ENCODE measurements at regions of chr3 and their contacts with region 1.

Region 1: GRCh38 chr3:32510075-32510724 is 7.5 kb upstream of the CMTM6 start:
- DNase-seq: peak; percentile 77 to 78
- ATAC-seq: peak; percentile 98 to 99
- H3K4me3 ChIP-seq: no peak overlapping the region
- H3K27ac ChIP-seq: no peak overlapping the region
- H3K4me1 ChIP-seq: no peaks in the 10 kb centered on the region
- CTCF ChIP-seq: peak; percentile 92
- EP300 ChIP-seq: no peak
- POLR2A ChIP-seq: no peak
- RAD21 ChIP-seq: peak; percentile 96 to 99

Region 2: GRCh38 chr3:32498252-32498651 is 11.9 kb before region 1 on chr3:
- CTCF ChIA-PET with region 1: interaction called, 13 read pairs
- POLR2A ChIA-PET with region 1: interaction called, 3 read pairs
- DNase-seq: no peak
- ATAC-seq: no peak
- H3K4me3 ChIP-seq: no peak overlapping the region
- H3K27ac ChIP-seq: no peak overlapping the region
- H3K4me1 ChIP-seq: peaks cover 19% of the 10 kb centered on the region; the same call in 2 of the 3 replicates
- CTCF ChIP-seq: no peak
- EP300 ChIP-seq: no peak
- POLR2A ChIP-seq: no peak
- RAD21 ChIP-seq: no peak

Region 3: DNA sequence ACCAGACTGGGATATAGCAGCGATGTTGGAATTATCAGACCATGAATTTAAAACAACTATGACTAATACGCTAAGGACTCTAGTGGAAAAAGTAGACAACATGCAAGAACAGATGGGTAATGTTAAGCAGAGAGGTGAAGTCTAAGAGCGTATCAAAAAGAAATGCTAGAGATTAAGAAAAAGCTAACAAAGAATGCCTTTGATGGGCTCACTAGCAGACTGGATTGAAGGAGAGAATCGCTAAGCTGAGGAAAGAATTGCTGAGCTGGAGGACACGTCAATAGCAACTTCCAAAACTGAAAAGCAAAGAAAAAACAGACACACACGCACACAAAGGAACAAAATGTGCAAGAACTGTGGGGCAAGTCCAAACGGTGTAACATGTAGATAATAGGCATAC is 12.5 kb after region 1 on chr3:
- CTCF ChIA-PET with region 1: interaction called, 21 read pairs
- POLR2A ChIA-PET with region 1: no interaction called
- DNase-seq: no peak
- ATAC-seq: no peak
- H3K4me3 ChIP-seq: no peak overlapping the region
- H3K27ac ChIP-seq: no peak overlapping the region
- H3K4me1 ChIP-seq: no peaks in the 10 kb centered on the region
- CTCF ChIP-seq: no peak
- EP300 ChIP-seq: no peak
- POLR2A ChIP-seq: no peak
- RAD21 ChIP-seq: no peak

Region 4: DNA sequence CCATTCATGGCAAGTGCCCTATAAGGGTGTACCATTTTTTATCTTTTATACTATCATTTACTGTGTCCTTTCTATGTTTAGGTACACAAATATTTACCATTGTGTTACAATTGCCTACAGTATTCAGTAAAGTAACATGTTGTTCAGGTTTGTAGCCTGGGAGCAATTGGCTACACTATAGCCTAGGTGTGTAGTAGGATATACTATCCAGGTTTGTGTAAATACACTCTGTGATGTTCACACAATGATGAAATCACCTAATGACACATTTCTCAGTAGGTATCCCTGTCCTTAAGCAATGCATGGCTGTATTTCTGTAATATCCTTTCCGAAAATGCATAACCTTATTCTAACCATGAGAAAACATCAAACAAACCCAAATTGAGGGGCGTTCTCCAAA is 156.9 kb after region 1 on chr3:
- CTCF ChIA-PET with region 1: interaction called, 92 read pairs
- POLR2A ChIA-PET with region 1: no interaction called
- DNase-seq: no peak
- ATAC-seq: peak in 1 of 2 experiments; percentile 26; a peak in 3 of 6 replicates
- H3K4me3 ChIP-seq: no peak overlapping the region
- H3K27ac ChIP-seq: no peak overlapping the region
- H3K4me1 ChIP-seq: no peaks in the 10 kb centered on the region
- CTCF ChIP-seq: no peak
- EP300 ChIP-seq: no peak
- POLR2A ChIP-seq: no peak
- RAD21 ChIP-seq: no peak

Region 5: GRCh38 chr3:32675164-32675563 is 165.0 kb after region 1 on chr3:
- CTCF ChIA-PET with region 1: interaction called, 19 read pairs
- POLR2A ChIA-PET with region 1: no interaction called
- DNase-seq: no peak
- ATAC-seq: peak in 1 of 2 experiments; percentile 13; a peak in 1 of 6 replicates
- H3K4me3 ChIP-seq: no peak overlapping the region
- H3K27ac ChIP-seq: no peak overlapping the region
- H3K4me1 ChIP-seq: no peaks in the 10 kb centered on the region
- CTCF ChIP-seq: no peak
- EP300 ChIP-seq: no peak
- POLR2A ChIP-seq: no peak
- RAD21 ChIP-seq: no peak

Region 6: DNA sequence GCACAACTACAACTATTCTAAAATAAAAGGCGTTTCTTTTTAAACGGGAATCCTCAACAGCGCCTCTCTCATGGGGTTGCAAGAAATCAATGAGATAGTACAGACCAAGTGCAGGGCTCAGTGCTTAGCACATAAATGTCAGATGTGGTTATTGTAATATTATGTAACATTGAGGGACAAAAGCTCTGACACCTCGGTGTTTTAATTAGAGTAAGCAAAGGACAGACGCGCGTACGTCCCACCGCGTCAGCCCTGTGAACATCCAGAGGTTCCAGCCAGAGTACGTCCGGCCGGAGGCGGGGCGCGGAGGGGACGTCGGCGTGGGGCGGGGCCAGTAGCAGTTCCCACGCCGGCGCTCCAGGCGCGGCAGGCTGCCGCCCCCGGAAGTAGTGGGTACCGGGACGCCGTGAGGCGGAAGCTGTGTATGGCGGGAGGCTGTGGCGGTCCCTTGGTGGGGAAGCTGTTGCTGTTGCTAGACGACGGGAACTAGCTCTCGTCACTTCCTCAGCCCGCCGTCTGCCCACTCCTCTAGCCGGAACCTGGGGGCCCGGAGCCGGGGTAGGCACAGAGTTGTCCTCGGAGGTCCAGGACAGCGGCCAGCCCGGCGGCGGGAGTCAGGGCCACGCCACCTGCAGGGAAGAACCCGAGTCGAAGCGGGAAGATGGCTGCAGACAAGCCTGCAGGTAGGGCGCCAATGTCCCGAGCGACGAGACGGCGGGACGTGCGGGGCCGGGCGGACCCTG is 174.8 kb after region 1 on chr3 and contains the start of gene CNOT10:
- CTCF ChIA-PET with region 1: interaction called, 19 read pairs
- POLR2A ChIA-PET with region 1: interaction called, 4 read pairs
- DNase-seq: peak; percentile 90 to 94
- ATAC-seq: peak; percentile 99
- H3K4me3 ChIP-seq: peak within 1 kb of the TSS; percentile 77
- H3K27ac ChIP-seq: peak within 1 kb of the TSS; percentile 85 to 93
- H3K4me1 ChIP-seq: peaks cover 18% of the 10 kb centered on the region
- CTCF ChIP-seq: 0 out of 3 replicates have a peak, but pooled peaks have one; percentile 5
- EP300 ChIP-seq: no peak
- POLR2A ChIP-seq: peak; percentile 83
- RAD21 ChIP-seq: no peak
- polyA plus RNA-seq, gene CNOT10: 38.7 and 43.2 TPM in 2 replicates

Region 7: GRCh38 chr3:32751377-32751776 is 241.2 kb after region 1 on chr3:
- CTCF ChIA-PET with region 1: no interaction called
- POLR2A ChIA-PET with region 1: no interaction called
- DNase-seq: no peak
- ATAC-seq: no peak
- H3K4me3 ChIP-seq: no peak overlapping the region
- H3K27ac ChIP-seq: no peak overlapping the region
- H3K4me1 ChIP-seq: no peaks in the 10 kb centered on the region
- CTCF ChIP-seq: no peak
- EP300 ChIP-seq: no peak
- POLR2A ChIP-seq: no peak
- RAD21 ChIP-seq: no peak